Activated T-helper 2 cell treated with anti-CD3 and anti-CD28 coated beads, Interferon-gamma antibody, Interleukin-2, Interleukin-4, amounts not matched to agents 10 μg/mL and 5 μg/mL and 100 μg/mL, durations not matched to agents 14 hours and 24 hours and 36 hours (primary cell): ENCODE measurements at regions of chr16 and their contacts with region 1.

Region 1: GRCh38 chr16:20799599-20799998 is 6.7 kb downstream of the ERI2 start:
- DNase-seq: no peak
- H3K4me3 Mint-ChIP-seq: no peak overlapping the region
- H3K27ac Mint-ChIP-seq: no peak overlapping the region
- H3K4me1 Mint-ChIP-seq: peaks cover 26% of the 10 kb centered on the region
- H3K27me3 Mint-ChIP-seq: no peaks in the 10 kb centered on the region

Region 2: GRCh38 chr16:21083729-21084268 is 284.2 kb after region 1 on chr16:
- intact Hi-C with region 1: loop called (anchors 5 kb)
- DNase-seq: peak; percentile 26
- H3K4me3 Mint-ChIP-seq: no peak overlapping the region
- H3K27ac Mint-ChIP-seq: no peak overlapping the region
- H3K4me1 Mint-ChIP-seq: no peaks in the 10 kb centered on the region
- H3K27me3 Mint-ChIP-seq: peaks cover 13% of the 10 kb centered on the region